ENCODE measurements at regions of chr3 and their contacts with region 1.

Region 1: GRCh38 chr3:186259612-186260383 is 102.2 kb downstream of the DGKG start:
- DNase-seq: peak; percentile 53
- H3K4me3 ChIP-seq: no peak overlapping the region
- H3K27ac ChIP-seq: no peak overlapping the region
- H3K4me1 ChIP-seq: no peaks in the 10 kb centered on the region
- H3K27me3 ChIP-seq: peaks cover 7% of the 10 kb centered on the region
- CTCF ChIP-seq: peak; percentile 85

Region 2: DNA sequence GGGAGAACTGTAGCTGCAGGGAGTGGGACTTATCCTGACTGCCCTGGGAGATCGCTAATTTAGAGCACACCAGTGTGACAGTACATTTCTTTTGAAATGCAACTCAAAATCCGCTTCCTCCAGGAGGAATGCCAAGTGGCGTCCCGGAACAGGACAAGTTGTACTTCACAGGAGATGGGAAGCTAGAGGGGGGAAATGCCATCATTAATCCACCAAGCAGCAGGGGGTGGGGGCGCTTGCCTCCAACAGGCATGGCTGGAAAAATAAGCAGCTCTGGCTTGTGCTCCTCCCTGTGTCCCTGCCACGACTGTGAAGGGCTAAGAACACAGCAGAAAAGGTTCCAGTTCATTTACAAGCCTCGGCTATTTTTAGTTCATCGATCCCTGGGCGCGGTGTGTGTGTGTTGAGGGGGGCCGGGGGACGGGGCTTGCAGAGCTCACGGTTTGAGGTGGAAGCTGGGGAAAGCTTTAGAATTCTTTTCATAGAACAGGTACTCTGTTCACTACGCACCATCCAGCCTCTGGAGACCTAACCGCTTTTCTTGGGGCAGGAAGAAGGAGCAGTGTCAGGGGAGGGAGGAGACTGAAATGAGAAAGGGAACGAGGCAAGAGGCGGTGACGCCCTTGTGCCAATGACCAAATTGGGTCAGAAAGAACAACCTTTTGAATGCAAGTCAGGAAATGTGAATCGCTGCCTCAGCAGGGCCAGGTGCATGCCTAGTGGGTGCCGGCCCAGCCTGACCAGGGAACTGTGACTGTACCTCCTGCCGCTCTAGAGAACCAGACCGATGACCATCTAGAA is 154.0 kb after region 1 on chr3:
- intact Hi-C with region 1: no loop called
- DNase-seq: peak; percentile 61
- H3K4me3 ChIP-seq: peak overlapping the region; percentile 57
- H3K27ac ChIP-seq: peak overlapping the region; percentile 86
- H3K4me1 ChIP-seq: peaks cover 28% of the 10 kb centered on the region
- H3K27me3 ChIP-seq: no peaks in the 10 kb centered on the region
- CTCF ChIP-seq: no peak

Region 3: DNA sequence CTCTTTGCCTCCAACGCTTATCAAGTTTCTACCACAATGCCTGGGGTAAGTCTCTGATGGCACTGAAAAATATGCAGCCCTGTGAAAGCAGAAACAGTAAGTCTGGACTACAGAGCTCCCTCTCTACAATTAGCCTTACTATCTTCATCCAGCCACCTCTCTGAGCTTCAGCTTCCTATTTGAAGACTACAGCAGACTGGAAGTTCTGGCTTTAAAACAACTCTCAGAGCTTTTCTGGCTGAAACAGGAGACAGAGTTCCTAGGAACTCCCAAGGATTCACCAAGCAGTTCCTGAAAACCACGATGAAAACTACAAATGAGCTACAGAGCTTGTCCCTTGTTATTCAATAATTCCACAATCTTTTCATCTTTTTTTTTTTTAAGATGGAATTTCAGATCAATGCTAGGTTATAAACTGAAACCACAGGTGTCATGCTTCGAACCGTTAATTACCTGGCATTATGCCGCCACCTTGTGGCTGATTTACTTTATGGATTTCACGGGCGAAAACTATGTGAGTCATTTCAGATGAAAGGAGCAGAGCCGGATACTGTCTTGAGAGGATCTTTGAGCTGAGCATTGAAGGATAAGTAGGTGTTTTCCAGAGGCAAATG is 280.5 kb after region 1 on chr3:
- intact Hi-C with region 1: loop called (anchors 10 kb)
- DNase-seq: peak; percentile 30
- H3K4me3 ChIP-seq: peak overlapping the region; percentile 40
- H3K27ac ChIP-seq: no peak overlapping the region
- H3K4me1 ChIP-seq: peaks cover 20% of the 10 kb centered on the region
- H3K27me3 ChIP-seq: no peaks in the 10 kb centered on the region
- CTCF ChIP-seq: peak; percentile 74

Region 4: GRCh38 chr3:186669378-186670084 is 409.7 kb after region 1 on chr3:
- intact Hi-C with region 1: no loop called
- DNase-seq: no peak
- H3K4me3 ChIP-seq: no peak overlapping the region
- H3K27ac ChIP-seq: no peak overlapping the region
- H3K4me1 ChIP-seq: no peaks in the 10 kb centered on the region
- H3K27me3 ChIP-seq: peaks cover 61% of the 10 kb centered on the region
- CTCF ChIP-seq: no peak

Measured in left ventricle myocardium inferior (tissue), 1 donor.